Prostate gland (tissue), 2 donors: ENCODE measurements at regions of chr1 and their contacts with region 1.

Region 1: DNA sequence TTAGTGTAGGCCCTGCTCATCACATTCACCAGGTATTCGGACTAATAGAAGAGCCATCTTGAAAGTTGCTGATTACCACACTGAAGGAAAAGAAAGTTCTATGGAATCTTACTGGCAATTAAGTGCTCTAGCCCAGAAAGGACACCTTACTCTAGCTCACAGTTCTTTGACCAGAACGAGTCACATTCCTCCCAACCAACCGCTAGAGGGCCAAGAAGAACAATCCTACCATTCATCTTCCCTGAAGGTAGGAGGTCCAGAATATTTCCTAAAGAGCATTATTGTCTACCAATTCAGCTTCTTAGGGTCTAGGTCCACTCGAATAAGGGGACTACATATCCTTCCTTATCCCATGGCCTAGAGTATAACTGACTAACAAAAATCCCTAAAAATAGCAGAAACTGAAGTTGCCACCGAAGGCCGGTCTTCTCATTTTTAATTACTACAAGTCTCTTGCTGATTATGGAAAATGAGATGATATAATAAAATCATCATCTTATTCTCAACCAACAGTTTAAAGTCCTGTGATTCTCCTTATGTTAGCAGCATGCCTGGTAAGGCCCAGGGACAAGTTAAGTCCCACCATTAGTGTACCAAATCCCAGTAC is 2.7 kb upstream of the FMO1 start:
- DNase-seq: peak; percentile 35
- H3K4me3 ChIP-seq: no peak overlapping the region
- H3K27ac ChIP-seq: no peak overlapping the region
- H3K4me1 ChIP-seq: no peaks in the 10 kb centered on the region
- H3K27me3 ChIP-seq: no peaks in the 10 kb centered on the region
- CTCF ChIP-seq: peak in 3 of 4 experiments; percentile 59 to 64 (median 59)
- POLR2A ChIP-seq: no peak

Region 2: GRCh38 chr1:171152549-171152948 is 93.0 kb before region 1 on chr1:
- intact Hi-C with region 1: no loop called
- DNase-seq: no peak
- H3K4me3 ChIP-seq: no peak overlapping the region
- H3K27ac ChIP-seq: no peak overlapping the region
- H3K4me1 ChIP-seq: no peaks in the 10 kb centered on the region
- H3K27me3 ChIP-seq: no peaks in the 10 kb centered on the region
- CTCF ChIP-seq: no peak
- POLR2A ChIP-seq: no peak

Region 3: GRCh38 chr1:171313835-171314320 is 68.3 kb after region 1 on chr1 and contains the start of gene FMO4:
- intact Hi-C with region 1: loop called (anchors 5 kb)
- DNase-seq: peak; percentile 95
- H3K4me3 ChIP-seq: peak within 1 kb of the TSS in 1 of 2 donors; percentile 8
- H3K27ac ChIP-seq: peak within 1 kb of the TSS; percentile 42 to 53
- H3K4me1 ChIP-seq: no peaks in the 10 kb centered on the region
- H3K27me3 ChIP-seq: no peaks in the 10 kb centered on the region
- CTCF ChIP-seq: peak; percentile 67 to 94 (median 91)
- POLR2A ChIP-seq: no peak
- total RNA-seq, gene FMO4: 6.7 to 7.1 TPM